Mammary epithelial cell (primary cell): ENCODE measurements at regions of chr7 and their contacts with region 1.

Region 1: DNA sequence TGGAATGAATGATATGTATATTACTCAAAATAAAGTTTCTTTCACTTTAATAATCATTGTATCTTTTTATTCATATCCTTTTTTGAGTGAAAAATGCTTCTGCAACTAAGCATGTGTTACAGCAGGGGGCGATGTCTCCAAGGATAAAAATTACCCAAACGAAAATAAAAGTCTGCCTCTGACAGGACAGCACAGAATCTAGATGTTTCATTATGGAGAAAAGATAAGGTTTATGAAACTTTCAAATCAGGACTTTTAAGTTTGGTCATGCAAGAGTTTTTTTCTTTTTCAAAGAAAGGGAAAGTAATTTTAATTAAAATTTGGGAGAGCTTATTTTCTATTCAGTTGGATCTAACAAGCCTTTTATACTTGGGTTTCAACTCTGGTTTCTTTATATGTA is 48.4 kb downstream of the TES start:
- DNase-seq: peak; percentile 50
- H3K4me3 ChIP-seq: no peak overlapping the region
- H3K27ac ChIP-seq: peak overlapping the region; percentile 95
- H3K4me1 ChIP-seq: peaks cover 27% of the 10 kb centered on the region
- H3K27me3 ChIP-seq: no peaks in the 10 kb centered on the region
- CTCF ChIP-seq: peak; percentile 67 to 75

Region 2: DNA sequence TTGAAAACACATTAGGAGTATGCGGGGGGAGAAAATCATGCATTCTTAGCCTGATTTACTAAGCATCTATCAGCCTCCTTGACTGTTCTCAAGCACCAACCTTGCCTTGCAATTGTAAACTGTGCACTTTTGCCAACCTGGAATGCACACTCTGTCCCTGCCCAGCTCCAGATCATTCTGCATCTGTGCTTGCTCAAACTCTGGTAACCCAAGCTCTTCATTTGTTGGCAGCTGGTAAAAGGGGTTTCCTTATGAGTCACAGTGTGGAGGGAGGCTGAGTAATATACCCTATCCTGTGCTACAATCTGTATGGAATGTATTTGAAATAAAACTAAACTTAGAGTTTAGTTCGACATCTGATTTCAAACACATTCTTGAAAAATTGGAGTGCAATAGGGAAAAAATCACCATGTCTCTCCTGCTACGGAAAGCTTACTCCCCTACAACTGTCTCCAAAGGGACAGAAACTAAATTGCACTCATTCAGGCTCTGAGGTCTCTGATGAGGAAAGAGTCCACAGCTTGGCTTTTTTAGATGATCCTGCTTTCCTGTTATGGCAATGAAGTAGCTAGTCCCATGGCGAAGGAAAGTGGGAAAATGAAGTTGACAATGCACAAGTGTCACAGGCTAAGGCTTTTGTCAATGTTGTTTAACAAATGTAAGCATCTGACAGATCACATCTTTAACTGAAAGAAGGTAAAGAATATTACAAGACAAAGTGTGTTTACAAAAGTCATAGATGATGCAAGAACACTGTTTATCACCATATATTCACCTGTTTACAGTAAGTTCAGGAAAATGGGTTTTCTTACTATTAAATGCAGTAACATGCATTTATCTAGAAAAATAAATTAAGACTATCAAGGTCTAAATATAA is 13.5 kb after region 1 on chr7:
- CTCF ChIA-PET with region 1: no interaction called
- dilution Hi-C with region 1: no loop called
- in situ Hi-C with region 1: no loop called
- intact Hi-C with region 1: loop called (anchors 1 kb)
- DNase-seq: peak; percentile 95
- H3K4me3 ChIP-seq: peak overlapping the region in 2 of 3 experiments; percentile 17 to 18
- H3K27ac ChIP-seq: peak overlapping the region; percentile 93
- H3K4me1 ChIP-seq: peaks cover 38% of the 10 kb centered on the region
- H3K27me3 ChIP-seq: no peaks in the 10 kb centered on the region
- CTCF ChIP-seq: no peak

Region 3: GRCh38 chr7:116340943-116341907 is 82.5 kb after region 1 on chr7:
- CTCF ChIA-PET with region 1: no interaction called
- dilution Hi-C with region 1: no loop called
- in situ Hi-C with region 1: no loop called
- intact Hi-C with region 1: loop called (anchors 1 kb)
- DNase-seq: no peak
- H3K4me3 ChIP-seq: no peak overlapping the region
- H3K27ac ChIP-seq: no peak overlapping the region
- H3K4me1 ChIP-seq: peaks cover 14% of the 10 kb centered on the region
- H3K27me3 ChIP-seq: no peaks in the 10 kb centered on the region
- CTCF ChIP-seq: peak; percentile 28 to 57

Region 4: DNA sequence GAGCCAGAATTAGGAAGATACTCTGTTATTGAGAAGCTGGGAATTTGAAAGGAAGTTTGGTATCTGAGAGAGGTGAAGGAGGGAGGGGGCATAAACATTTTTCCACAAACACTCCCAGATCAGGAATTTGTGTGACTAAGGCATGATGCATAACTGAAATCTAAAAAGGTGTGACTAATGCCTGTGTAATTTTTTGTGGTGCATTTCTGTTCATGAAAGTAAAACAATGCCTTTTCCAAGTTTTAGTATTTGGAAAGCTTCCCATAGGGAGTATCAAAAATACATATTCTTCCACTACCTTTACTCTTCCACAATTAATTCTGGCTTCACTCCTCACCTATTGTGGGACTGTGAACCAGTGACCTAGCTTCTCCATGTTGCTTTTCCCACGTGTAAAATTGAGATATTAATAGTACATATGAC is 184.4 kb after region 1 on chr7:
- CTCF ChIA-PET with region 1: no interaction called
- dilution Hi-C with region 1: no loop called
- in situ Hi-C with region 1: loop called in 1 of 2 experiments (anchors 10 kb)
- intact Hi-C with region 1: loop called (anchors 1 kb)
- DNase-seq: peak; percentile 90
- H3K4me3 ChIP-seq: no peak overlapping the region
- H3K27ac ChIP-seq: peak overlapping the region; percentile 98
- H3K4me1 ChIP-seq: peaks cover 30% of the 10 kb centered on the region
- H3K27me3 ChIP-seq: no peaks in the 10 kb centered on the region
- CTCF ChIP-seq: no peak

Region 5: GRCh38 chr7:116582806-116583444 is 324.2 kb after region 1 on chr7:
- CTCF ChIA-PET with region 1: no interaction called
- dilution Hi-C with region 1: loop called (anchors 5 kb)
- in situ Hi-C with region 1: no loop called
- intact Hi-C with region 1: no loop called
- DNase-seq: no peak
- H3K4me3 ChIP-seq: no peak overlapping the region
- H3K27ac ChIP-seq: no peak overlapping the region
- H3K4me1 ChIP-seq: peaks cover 14% of the 10 kb centered on the region
- H3K27me3 ChIP-seq: no peaks in the 10 kb centered on the region
- CTCF ChIP-seq: no peak

Region 6: GRCh38 chr7:116809636-116810266 is 551.0 kb after region 1 on chr7:
- CTCF ChIA-PET with region 1: no interaction called
- dilution Hi-C with region 1: no loop called
- in situ Hi-C with region 1: no loop called
- intact Hi-C with region 1: loop called (anchors 5 kb)
- DNase-seq: peak; percentile 56
- H3K4me3 ChIP-seq: no peak overlapping the region
- H3K27ac ChIP-seq: no peak overlapping the region
- H3K4me1 ChIP-seq: peaks cover 3% of the 10 kb centered on the region
- H3K27me3 ChIP-seq: no peaks in the 10 kb centered on the region
- CTCF ChIP-seq: peak; percentile 45 to 65